ENCODE measurements at regions of chr2 and their contacts with region 1.

Region 1: GRCh38 chr2:107625982-107626381 is 200.7 kb upstream of the RGPD4 start:
- DNase-seq: no peak
- H3K4me3 Mint-ChIP-seq: no peak overlapping the region
- H3K27ac Mint-ChIP-seq: no peak overlapping the region
- H3K4me1 Mint-ChIP-seq: no peaks in the 10 kb centered on the region
- H3K27me3 Mint-ChIP-seq: no peaks in the 10 kb centered on the region
- CTCF ChIP-seq: no peak

Region 2: GRCh38 chr2:107669335-107669734 is 43.4 kb after region 1 on chr2:
- CTCF ChIA-PET with region 1: no interaction called
- intact Hi-C with region 1: loop called (anchors 1 kb)
- DNase-seq: no peak
- H3K4me3 Mint-ChIP-seq: no peak overlapping the region
- H3K27ac Mint-ChIP-seq: no peak overlapping the region
- H3K4me1 Mint-ChIP-seq: no peaks in the 10 kb centered on the region
- H3K27me3 Mint-ChIP-seq: no peaks in the 10 kb centered on the region
- CTCF ChIP-seq: no peak

Region 3: DNA sequence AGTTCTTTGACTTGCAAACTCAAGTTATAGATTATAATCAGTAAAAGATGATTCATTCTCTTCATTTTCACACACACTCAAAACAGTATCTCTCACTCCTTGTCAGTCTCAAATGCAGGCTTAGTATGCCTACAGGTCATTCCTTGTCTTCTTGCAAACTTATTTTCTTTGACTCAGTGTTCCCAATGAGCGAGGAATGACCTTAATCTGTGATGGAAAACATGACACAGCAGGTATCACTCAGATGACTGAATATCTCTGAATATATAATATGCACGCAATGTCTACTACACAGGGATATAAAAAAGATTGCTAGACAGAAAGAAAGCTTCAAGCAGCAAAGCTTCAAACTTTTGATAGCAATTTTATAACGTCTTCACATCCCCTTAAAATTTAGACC is 72.9 kb after region 1 on chr2:
- CTCF ChIA-PET with region 1: no interaction called
- intact Hi-C with region 1: no loop called
- DNase-seq: no peak
- H3K4me3 Mint-ChIP-seq: no peak overlapping the region
- H3K27ac Mint-ChIP-seq: no peak overlapping the region
- H3K4me1 Mint-ChIP-seq: no peaks in the 10 kb centered on the region
- H3K27me3 Mint-ChIP-seq: no peaks in the 10 kb centered on the region
- CTCF ChIP-seq: no peak

Region 4: GRCh38 chr2:107936433-107937359 is 310.7 kb after region 1 on chr2:
- CTCF ChIA-PET with region 1: no interaction called
- intact Hi-C with region 1: no loop called
- DNase-seq: peak; percentile 42
- H3K4me3 Mint-ChIP-seq: no peak overlapping the region
- H3K27ac Mint-ChIP-seq: no peak overlapping the region
- H3K4me1 Mint-ChIP-seq: no peaks in the 10 kb centered on the region
- H3K27me3 Mint-ChIP-seq: peaks cover 23% of the 10 kb centered on the region
- CTCF ChIP-seq: peak; percentile 59

Measured in Calu3 (cell line).